Left ventricle myocardium inferior (tissue), 1 donor: ENCODE measurements at regions of chr6 and their contacts with region 1.

Region 1: DNA sequence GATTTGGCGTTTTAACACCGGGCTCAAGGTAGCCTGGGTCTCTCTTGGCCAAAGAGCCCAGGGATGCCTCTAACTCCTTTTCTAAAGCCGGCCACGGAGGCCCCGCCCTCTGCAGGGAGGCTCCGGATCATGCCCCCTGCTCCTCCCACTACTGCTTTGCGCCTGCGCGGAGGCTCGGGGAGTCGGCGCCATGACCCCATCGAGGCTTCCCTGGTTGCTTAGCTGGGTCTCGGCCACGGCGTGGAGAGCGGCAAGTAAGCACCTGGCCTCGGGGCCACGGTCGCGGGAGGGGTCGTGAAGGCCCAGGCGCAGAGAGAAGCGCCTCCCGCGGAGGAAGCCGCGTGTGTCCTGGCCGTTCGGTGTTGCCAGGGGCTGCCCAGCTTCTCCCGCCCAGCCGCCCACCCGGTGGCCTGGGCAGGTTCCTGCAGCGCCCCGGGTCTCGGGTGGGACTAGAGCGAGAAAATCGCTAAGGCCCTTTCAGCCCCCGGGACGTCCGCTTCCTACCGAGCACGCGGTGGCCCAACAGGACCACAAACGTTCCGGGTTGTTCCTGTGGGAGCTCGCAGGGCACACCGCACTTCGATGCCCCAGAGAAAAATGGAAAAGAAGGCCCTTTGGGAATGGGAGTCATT is at the start of gene SDHAF4:
- DNase-seq: peak; percentile 93
- H3K4me3 ChIP-seq: peak within 1 kb of the TSS; percentile 82
- H3K27ac ChIP-seq: peak within 1 kb of the TSS; percentile 91
- H3K4me1 ChIP-seq: peaks cover 22% of the 10 kb centered on the region
- H3K27me3 ChIP-seq: no peaks in the 10 kb centered on the region
- CTCF ChIP-seq: peak; percentile 46
- total RNA-seq, gene SDHAF4: 17.7 TPM

Region 2: GRCh38 chr6:70667711-70668498 is 101.0 kb after region 1 on chr6 and contains the start of gene SMAP1:
- intact Hi-C with region 1: loop called (anchors 10 kb)
- DNase-seq: peak; percentile 97
- H3K4me3 ChIP-seq: peak within 1 kb of the TSS; percentile 93
- H3K27ac ChIP-seq: peak within 1 kb of the TSS; percentile 98
- H3K4me1 ChIP-seq: peaks cover 72% of the 10 kb centered on the region
- H3K27me3 ChIP-seq: no peaks in the 10 kb centered on the region
- CTCF ChIP-seq: no peak
- total RNA-seq, gene SMAP1: 32.1 TPM